K562 (cell line): ENCODE measurements at regions of chr10 and their contacts with region 1.

Region 1: GRCh38 chr10:22682237-22683139 is 31.9 kb downstream of the PIP4K2A start:
- DNase-seq: peak in 3 of 4 experiments; percentile 45 to 51 (median 45)
- ATAC-seq: peak; percentile 18
- H3K4me3 ChIP-seq: no peak overlapping the region
- H3K27ac ChIP-seq: peak overlapping the region; percentile 91
- H3K4me1 ChIP-seq: peaks cover 30 to 71% of the 10 kb centered on the region in 2 experiments
- H3K27me3 ChIP-seq: no peaks in the 10 kb centered on the region
- CTCF ChIP-seq: no peak
- EP300 ChIP-seq: no peak
- POLR2A ChIP-seq: no peak
- RAD21 ChIP-seq: no peak

Region 2: DNA sequence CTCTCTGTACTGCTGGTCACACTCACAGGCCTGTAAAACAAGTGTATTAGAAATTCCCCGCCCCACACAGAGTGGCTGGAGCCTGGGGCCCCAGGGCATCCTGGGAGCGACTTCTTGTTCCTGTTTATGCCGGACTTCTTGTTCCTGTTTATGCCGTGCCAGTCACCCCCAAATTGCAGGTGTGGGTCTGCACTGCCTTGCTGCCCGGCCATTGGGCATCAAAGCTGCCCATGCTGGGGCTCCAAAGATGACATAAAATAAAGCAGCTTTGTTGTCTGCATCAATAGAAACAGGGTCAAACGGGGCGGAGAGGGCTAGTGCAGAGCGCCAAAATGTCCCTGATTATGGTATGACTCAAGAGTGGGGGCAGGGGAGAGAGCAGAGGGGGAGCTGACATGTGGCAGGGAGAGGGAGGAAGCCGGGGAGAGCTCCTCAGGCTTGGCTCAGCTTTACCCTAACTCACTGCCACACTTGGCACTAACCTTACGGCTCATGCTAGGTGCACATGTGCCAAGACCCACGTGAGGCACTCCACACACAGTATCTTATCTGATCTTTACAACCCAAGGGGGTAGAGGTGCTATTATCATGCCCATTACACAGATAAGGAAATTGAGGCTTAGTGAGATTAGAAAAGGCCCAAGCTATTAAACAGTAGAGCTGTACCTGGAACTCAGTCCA is 66.5 kb before region 1 on chr10:
- CTCF ChIA-PET with region 1: no interaction called
- POLR2A ChIA-PET with region 1: no interaction called
- in situ Hi-C with region 1: no loop called
- intact Hi-C with region 1: loop called (anchors 5 kb)
- DNase-seq: peak; percentile 70 to 86 (median 74)
- ATAC-seq: peak; percentile 97
- H3K4me3 ChIP-seq: peak overlapping the region; percentile 49
- H3K27ac ChIP-seq: peak overlapping the region; percentile 95
- H3K4me1 ChIP-seq: peaks cover 17 to 41% of the 10 kb centered on the region in 2 experiments
- H3K27me3 ChIP-seq: no peaks in the 10 kb centered on the region
- CTCF ChIP-seq: no peak
- EP300 ChIP-seq: no peak; the same call in 1 of the 2 replicates
- POLR2A ChIP-seq: peak; percentile 71
- RAD21 ChIP-seq: no peak; a peak in 1 of 4 replicates

Region 3: DNA sequence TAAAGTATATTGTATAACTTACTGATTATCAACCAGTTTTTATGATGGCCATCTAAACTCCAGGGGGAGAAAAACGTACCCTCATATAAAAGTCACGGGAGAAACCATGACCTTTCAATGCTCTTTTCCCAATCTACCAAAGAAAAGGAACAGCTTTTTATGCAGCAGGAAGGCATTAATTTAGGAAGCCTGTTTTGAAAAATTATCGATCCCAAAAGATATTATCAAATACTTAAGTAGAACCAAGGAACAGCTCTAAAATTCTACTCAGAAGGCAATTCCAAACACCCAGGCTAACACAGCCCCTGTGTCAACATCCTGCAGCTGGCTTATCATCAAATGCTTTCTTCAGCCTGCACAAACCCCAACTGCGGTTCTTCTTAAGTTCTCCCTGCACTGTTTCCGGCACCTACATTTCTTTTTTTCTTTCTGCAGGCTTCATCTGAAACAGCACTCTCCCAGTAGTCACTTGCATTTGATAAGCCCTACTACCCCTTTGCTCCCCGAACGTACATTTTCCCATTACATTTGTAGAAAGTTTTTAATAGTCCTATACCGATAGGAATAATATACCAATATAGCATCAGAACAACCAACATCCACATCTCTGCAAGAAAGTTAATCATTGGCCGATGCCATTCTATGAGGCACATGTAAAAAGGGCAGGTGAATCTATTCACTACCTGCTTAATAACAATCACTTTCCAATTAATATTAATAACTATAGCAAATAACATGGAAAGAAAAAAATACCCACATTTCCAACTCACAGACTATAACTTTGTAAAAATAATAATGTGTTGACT is 16.0 kb before region 1 on chr10:
- CTCF ChIA-PET with region 1: no interaction called
- POLR2A ChIA-PET with region 1: interaction called, 21 read pairs
- in situ Hi-C with region 1: no loop called
- intact Hi-C with region 1: loop called (anchors 2 kb)
- DNase-seq: peak in 3 of 4 experiments; percentile 25 to 86 (median 72)
- ATAC-seq: peak; percentile 85
- H3K4me3 ChIP-seq: peak overlapping the region; percentile 7; the same call in 1 of the 2 replicates
- H3K27ac ChIP-seq: peak overlapping the region; percentile 78; the same call in 2 of the 3 replicates
- H3K4me1 ChIP-seq: peaks cover 23 to 55% of the 10 kb centered on the region in 2 experiments
- H3K27me3 ChIP-seq: no peaks in the 10 kb centered on the region
- CTCF ChIP-seq: no peak
- EP300 ChIP-seq: peak; percentile 69; the same call in 1 of the 2 replicates
- POLR2A ChIP-seq: no peak
- RAD21 ChIP-seq: peak in 1 of 2 experiments; percentile 25; a peak in 1 of 4 replicates

Region 4: DNA sequence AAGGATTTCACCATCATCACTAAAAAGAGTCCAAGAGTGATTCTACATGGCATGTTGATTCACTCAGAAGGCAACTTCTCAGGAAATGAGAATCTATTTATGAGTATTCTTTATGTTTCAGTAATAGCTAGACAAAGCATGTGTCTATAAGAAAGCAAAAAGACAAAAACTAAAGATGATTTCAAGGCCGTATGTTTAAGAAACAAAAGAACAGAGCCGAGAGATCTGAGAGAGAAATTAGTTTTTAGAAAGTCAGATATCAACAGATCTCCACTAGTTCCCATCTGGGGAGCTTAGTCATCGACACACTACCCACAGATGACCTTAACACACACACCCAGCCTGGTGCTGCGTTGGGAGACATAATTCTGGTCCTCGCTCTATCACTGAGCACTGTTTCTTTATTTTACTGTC is 10.9 kb after region 1 on chr10:
- CTCF ChIA-PET with region 1: no interaction called
- POLR2A ChIA-PET with region 1: interaction called, 14 read pairs
- in situ Hi-C with region 1: no loop called
- intact Hi-C with region 1: no loop called
- DNase-seq: peak; percentile 36 to 82 (median 56)
- ATAC-seq: peak; percentile 86
- H3K4me3 ChIP-seq: no peak overlapping the region
- H3K27ac ChIP-seq: peak overlapping the region; percentile 27; the same call in 1 of the 3 replicates
- H3K4me1 ChIP-seq: peaks cover 5 to 49% of the 10 kb centered on the region in 2 experiments
- H3K27me3 ChIP-seq: no peaks in the 10 kb centered on the region
- CTCF ChIP-seq: no peak
- EP300 ChIP-seq: peak; percentile 52; the same call in 1 of the 2 replicates
- POLR2A ChIP-seq: no peak
- RAD21 ChIP-seq: no peak; a peak in 1 of 4 replicates

Region 5: GRCh38 chr10:22704471-22704911 is 22.0 kb after region 1 on chr10:
- CTCF ChIA-PET with region 1: no interaction called
- POLR2A ChIA-PET with region 1: interaction called, 13 read pairs
- in situ Hi-C with region 1: no loop called
- intact Hi-C with region 1: no loop called
- DNase-seq: no peak
- ATAC-seq: 0 out of 3 replicates have a peak, but pooled peaks have one; percentile 9
- H3K4me3 ChIP-seq: no peak overlapping the region
- H3K27ac ChIP-seq: peak overlapping the region; percentile 41; the same call in 2 of the 3 replicates
- H3K4me1 ChIP-seq: peaks cover 19 to 61% of the 10 kb centered on the region in 2 experiments
- H3K27me3 ChIP-seq: no peaks in the 10 kb centered on the region
- CTCF ChIP-seq: no peak
- EP300 ChIP-seq: no peak
- POLR2A ChIP-seq: no peak
- RAD21 ChIP-seq: no peak